Activated T-helper 1 cell treated with anti-CD3 and anti-CD28 coated beads, Interleukin-12 subunit alpha, Interleukin-12 subunit beta, Interleukin-2, Interleukin-4 antibody, amounts not matched to agents 30 ng/mL and 10 ng/mL and 1 ng/mL, durations not matched to agents 14 hours and 24 hours and 36 hours (primary cell): ENCODE measurements at regions of chr11 and their contacts with region 1.

Region 1: GRCh38 chr11:118171269-118172062 is 5.0 kb downstream of the SCN2B start:
- DNase-seq: peak; percentile 63
- H3K4me3 Mint-ChIP-seq: no peak overlapping the region
- H3K27ac Mint-ChIP-seq: no peak overlapping the region
- H3K4me1 Mint-ChIP-seq: peaks cover 5% of the 10 kb centered on the region
- H3K27me3 Mint-ChIP-seq: peaks cover 34% of the 10 kb centered on the region

Region 2: GRCh38 chr11:117807482-117808327 is 363.8 kb before region 1 on chr11:
- intact Hi-C with region 1: loop called (anchors 5 kb)
- DNase-seq: peak; percentile 53
- H3K4me3 Mint-ChIP-seq: no peak overlapping the region
- H3K27ac Mint-ChIP-seq: peak overlapping the region; percentile 30
- H3K4me1 Mint-ChIP-seq: peaks cover 33% of the 10 kb centered on the region
- H3K27me3 Mint-ChIP-seq: peaks cover 5% of the 10 kb centered on the region

Region 3: DNA sequence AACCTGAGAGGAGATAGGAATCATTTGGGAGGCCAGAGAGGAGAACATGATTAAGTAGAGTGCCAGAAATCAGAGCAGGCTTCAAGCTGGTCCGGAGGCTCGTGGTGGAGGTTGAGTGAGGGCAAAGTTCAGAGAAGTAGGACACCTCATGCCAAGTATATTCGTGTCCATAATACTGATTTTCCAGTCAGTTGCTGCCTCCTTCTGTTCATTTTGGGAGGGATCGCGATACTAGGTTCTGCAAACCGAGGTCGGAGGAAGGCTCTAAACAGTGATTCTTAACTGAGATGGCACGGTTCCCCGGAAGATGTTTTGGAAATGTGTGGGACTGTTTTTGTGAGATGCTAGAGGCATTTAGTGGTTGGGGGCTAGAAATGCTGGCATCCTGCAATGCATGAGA is 119.5 kb after region 1 on chr11:
- intact Hi-C with region 1: loop called (anchors 1 kb)
- DNase-seq: peak; percentile 40
- H3K4me3 Mint-ChIP-seq: no peak overlapping the region
- H3K27ac Mint-ChIP-seq: peak overlapping the region; percentile 15
- H3K4me1 Mint-ChIP-seq: peaks cover 29% of the 10 kb centered on the region
- H3K27me3 Mint-ChIP-seq: peaks cover 2% of the 10 kb centered on the region